Colonic mucosa (tissue), 4 donors: ENCODE measurements at regions of chr19 and their contacts with region 1.

Region 1: GRCh38 chr19:49937750-49938381 is 8.6 kb upstream of the NUP62 start:
- DNase-seq: peak; percentile 84
- H3K4me3 ChIP-seq: peak overlapping the region; percentile 4
- H3K27ac ChIP-seq: no peak overlapping the region
- H3K4me1 ChIP-seq: peaks cover 5% of the 10 kb centered on the region
- H3K27me3 ChIP-seq: no peaks in the 10 kb centered on the region
- CTCF ChIP-seq: peak; percentile 95

Region 2: GRCh38 chr19:49983645-49984229 is 45.9 kb after region 1 on chr19:
- intact Hi-C with region 1: loop called (anchors 1 kb)
- DNase-seq: peak; percentile 74
- H3K4me3 ChIP-seq: no peak overlapping the region
- H3K27ac ChIP-seq: no peak overlapping the region
- H3K4me1 ChIP-seq: no peaks in the 10 kb centered on the region
- H3K27me3 ChIP-seq: no peaks in the 10 kb centered on the region
- CTCF ChIP-seq: peak; percentile 90

Region 3: GRCh38 chr19:50050384-50051224 is 112.7 kb after region 1 on chr19:
- intact Hi-C with region 1: no loop called
- DNase-seq: peak; percentile 83
- H3K4me3 ChIP-seq: peak overlapping the region; percentile 51
- H3K27ac ChIP-seq: peak overlapping the region; percentile 34
- H3K4me1 ChIP-seq: peaks cover 4% of the 10 kb centered on the region
- H3K27me3 ChIP-seq: no peaks in the 10 kb centered on the region
- CTCF ChIP-seq: no peak